ENCODE measurements at regions of chr7 and their contacts with region 1.

Region 1: DNA sequence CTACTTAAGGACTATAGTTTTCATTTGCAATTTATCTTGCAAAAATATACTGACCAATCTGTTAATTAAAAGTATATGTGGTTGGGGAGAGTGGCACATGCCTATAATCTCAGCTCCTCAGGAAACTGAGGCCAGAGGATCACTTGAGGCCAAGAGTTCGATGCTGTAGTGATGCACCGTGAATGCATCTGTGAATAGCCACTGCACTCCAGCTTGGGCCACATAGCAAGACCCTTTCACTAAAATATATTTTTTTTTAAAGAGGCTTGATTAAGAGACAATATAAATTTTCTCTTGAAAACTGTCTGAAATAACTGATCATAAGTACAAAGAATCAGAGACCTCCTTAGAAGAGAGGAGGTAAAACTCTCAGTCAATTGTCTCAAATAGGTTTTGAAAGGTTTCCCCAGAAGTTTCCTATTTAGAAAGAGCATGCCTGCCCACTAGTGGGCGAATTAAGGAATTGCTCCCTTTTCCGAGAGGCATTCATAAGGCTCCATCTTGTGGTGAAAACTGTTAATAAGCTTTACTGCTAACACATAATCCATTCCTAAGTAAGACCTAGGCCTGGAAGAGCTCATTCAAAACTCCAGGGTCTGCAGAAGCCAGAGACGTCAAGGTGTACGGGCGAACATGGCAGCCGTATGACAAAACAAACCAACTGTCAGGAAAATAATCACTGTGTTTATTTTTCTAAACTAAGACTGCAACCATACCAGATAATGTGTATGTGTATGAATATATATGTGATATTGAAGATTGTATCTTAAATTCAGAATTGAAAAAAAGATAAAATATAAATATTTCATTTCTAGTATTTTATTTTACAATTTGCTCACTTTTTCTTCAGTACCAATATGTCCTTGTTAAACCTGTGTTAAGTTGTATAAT is 6.8 kb upstream of the TAS2R40 start:
- DNase-seq: peak; percentile 72
- H3K4me3 ChIP-seq: no peak overlapping the region
- H3K27ac ChIP-seq: no peak overlapping the region
- H3K4me1 ChIP-seq: no peaks in the 10 kb centered on the region
- H3K27me3 ChIP-seq: no peaks in the 10 kb centered on the region
- CTCF ChIP-seq: peak; percentile 98 to 100 (median 99)
- POLR2A ChIP-seq: no peak

Region 2: DNA sequence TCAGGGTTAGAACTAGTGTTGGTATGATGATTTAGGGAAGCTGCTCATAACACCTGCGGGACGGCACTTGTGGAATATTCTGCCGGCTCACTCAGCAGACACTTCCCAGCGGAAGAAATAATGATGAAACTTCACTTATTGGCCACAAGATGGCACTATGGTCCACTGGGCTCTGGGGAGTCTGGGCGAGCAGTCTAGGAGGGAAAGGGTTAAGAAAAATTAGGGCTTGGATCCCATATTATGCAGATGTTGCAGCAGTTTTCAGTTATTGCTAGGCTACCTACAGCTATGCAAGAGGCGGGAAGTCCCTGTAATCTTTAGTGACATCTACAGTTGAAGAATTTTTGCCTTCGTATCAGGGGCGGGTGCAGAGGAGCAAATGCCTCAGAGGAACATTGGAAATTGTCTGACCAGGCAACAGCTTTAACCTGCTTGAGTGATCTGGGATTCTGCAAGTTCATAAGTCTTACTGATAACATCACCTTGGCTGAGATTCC is 718.4 kb before region 1 on chr7:
- intact Hi-C with region 1: no loop called
- DNase-seq: no peak
- H3K4me3 ChIP-seq: no peak overlapping the region
- H3K27ac ChIP-seq: no peak overlapping the region
- H3K4me1 ChIP-seq: peaks cover 6% of the 10 kb centered on the region
- H3K27me3 ChIP-seq: no peaks in the 10 kb centered on the region
- CTCF ChIP-seq: peak; percentile 41 to 78 (median 49)
- POLR2A ChIP-seq: no peak

Region 3: DNA sequence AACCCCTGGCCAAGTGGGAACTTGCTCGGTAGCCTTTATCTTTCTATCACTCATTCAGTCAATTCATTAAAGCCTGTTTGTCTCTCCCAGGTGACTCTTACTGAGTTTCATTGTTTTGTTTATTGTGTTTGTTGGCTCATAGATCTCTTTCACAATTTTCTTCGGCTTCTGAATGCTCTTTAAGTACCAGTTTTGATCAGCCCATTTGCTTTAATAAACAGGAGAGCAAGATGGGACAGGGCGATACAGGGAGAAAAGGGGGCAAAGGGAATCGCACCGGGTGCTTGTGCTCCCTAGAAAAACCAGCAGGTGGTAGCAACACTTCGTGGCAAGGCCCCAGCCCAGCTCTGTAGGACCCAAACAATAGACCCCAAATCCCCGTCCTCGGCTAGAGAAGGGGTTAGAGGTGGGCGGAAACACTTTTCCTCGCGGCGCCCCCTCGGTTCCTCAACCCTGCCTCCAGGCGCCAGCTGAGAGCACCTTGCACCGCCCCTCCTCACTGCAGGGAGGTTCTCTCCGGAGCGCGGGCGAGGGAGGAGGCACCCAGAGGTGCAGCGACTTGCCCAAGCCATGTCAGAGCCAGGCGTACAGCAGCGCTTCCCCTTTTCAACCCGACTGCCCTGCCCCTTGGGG is 361.2 kb before region 1 on chr7:
- intact Hi-C with region 1: loop called (anchors 10 kb)
- DNase-seq: peak; percentile 80
- H3K4me3 ChIP-seq: peak overlapping the region; percentile 70 to 76
- H3K27ac ChIP-seq: peak overlapping the region in 1 of 2 donors; percentile 81
- H3K4me1 ChIP-seq: peaks cover 7% of the 10 kb centered on the region
- H3K27me3 ChIP-seq: no peaks in the 10 kb centered on the region
- CTCF ChIP-seq: peak; percentile 63 to 82 (median 75)
- POLR2A ChIP-seq: no peak

Region 4: DNA sequence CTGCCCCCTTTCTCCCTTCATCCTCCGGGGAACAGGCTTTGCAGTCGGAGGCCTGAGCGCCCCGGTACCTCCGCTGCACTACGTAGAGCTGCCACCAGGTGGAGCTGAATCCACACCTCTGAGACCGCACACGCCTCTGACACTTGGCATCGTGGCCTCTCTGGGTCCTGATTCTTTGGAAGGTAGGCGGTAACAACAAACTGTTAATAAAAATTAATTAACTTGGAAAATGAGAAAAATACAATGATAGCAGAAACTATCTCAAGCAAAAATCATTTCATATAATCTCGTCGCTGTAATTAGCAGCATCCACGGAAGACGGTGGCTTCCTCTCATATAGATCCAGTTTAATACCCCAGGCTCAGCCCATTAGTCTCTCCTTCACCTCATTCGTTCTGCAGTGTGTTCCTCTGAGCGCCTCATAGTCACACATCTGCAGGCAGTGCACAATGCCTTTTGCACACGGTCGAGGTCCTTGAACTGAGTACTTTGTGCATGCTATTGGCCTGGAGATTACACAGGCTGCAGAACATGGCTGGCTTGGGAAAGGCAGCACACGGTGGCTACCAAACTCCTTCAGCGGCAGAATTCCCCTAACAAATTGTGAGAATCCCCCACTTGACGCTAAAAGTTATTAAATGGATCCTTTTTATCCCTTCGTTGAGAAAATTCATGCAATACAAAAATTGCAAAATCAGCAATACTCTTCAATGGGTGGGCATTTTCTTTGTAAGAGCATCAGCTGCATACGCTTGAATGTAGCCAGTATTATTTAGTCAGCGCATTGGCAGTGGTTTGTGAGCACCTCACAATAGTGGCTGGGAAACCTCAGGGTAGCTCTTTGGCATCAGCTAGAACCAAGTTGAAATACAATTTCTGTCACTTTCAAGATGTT is 206.8 kb before region 1 on chr7:
- intact Hi-C with region 1: loop called (anchors 5 kb)
- DNase-seq: peak; percentile 91
- H3K4me3 ChIP-seq: no peak overlapping the region
- H3K27ac ChIP-seq: no peak overlapping the region
- H3K4me1 ChIP-seq: peaks cover under 1% of the 10 kb centered on the region
- H3K27me3 ChIP-seq: no peaks in the 10 kb centered on the region
- CTCF ChIP-seq: peak; percentile 96 to 98 (median 97)
- POLR2A ChIP-seq: no peak